G401 (cell line): ENCODE measurements at regions of chr16 and their contacts with region 1.

Region 1: DNA sequence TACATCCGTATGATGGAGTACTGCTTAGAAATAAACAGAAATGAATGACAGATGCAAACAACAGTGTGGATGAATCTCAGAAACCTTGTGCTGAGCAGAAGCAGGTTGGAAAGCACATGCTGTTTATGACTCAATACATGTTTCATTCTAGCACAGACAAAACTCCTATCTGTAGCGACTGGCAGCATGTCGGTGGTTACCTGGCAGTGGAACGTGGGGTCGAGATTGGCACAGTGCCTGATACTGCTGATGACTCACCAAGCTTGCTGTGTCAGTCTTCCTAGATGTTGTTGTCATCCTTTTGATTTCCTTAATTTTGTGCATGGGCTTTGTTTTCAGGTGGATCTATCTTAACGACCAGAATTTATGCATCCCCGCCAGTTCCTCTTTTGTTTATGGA is 62.1 kb downstream of the GAN start:
- DNase-seq: no peak

Region 2: DNA sequence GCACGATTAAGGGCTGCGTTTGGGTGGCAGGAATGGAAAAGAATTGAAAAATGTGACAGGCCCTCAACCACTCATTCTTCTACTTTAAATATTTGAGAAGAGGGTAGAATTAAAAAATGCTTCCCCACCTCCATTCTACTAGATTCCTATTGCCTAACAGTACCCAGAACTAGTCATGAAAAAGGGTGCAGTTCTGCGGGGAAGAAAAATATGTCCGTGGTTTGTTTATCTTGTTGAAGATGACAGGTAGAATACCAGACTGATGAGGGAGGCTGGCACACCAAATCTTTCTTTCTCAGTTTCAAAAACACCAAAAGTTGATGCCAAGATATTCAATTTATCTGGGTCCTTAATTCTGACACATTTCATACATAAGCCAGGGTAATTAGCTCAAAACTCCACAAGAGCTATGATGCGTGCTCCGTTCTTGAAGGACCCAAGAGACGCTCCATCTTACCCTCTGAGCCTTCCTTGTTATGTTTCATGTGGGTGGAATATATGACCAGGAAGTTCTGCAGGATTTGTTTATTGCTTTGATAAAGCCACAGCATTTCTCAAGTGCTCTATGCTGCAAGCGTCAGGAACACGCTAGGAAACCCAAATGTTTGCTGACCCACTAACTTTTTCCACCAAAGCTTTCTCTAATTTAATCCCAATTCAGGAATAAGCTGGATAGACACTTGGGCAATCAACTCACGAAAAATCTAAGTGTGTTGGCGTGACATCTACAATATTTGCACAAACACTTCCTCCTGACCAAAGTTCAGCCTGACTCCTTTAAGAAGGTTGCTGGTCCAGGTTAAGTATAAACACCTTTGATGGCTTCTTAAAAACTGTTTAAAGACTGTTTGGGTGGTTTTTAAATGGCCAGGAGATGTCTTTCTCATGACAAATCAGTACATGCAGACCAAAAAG is 82.7 kb before region 1 on chr16:
- in situ Hi-C with region 1: no loop called
- DNase-seq: no peak

Region 3: GRCh38 chr16:81335669-81336068 is 41.2 kb before region 1 on chr16:
- in situ Hi-C with region 1: no loop called
- DNase-seq: no peak

Region 4: DNA sequence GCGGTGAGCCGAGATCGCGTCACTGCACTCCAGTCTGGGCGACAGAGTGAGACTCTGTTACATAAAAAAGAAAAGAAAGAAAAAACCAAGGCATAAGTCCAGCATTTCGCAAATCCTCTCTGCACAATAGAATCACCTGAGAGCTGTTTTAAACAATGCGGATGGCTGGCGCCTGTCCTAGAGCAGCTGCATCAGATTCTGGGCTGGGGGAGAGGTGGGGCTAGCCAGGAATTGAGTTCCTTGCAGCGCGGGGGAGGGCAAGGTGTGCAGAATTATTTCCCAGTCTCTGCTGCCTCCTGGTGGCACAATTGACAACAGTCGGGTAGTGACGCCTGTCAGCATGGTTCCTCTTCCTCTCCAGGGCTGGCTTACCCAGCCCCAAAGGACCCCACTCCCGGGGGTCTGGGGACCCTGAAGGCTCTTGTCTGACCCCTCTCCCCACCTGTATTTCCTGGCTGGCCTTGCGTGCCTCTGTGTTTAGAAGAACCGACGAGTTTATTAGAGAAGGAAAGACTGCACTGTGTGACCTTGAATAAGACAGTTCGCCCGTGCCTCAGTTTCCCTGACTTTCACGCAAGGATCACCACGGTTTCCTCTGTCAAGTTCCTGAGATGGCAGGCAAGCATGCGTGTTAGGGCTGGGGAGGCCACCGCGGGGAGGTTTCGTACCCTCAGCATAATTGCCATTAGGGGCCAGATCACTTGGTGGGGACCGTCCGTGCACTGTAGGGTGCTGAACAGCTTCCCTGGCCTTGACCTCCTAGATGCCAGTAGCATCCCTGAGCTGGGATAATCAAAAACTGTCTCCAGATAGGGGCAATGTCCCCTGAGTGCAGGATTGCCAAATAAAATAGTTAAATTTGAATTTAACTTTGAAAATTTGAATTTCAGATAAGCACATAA is 361.3 kb after region 1 on chr16:
- in situ Hi-C with region 1: loop called (anchors 25 kb)
- DNase-seq: peak; percentile 80